Activated T-helper 1 cell treated with anti-CD3 and anti-CD28 coated beads, Interleukin-12 subunit alpha, Interleukin-12 subunit beta, Interleukin-2, Interleukin-4 antibody, amounts not matched to agents 30 ng/mL and 10 ng/mL and 1 ng/mL, durations not matched to agents 14 hours and 24 hours and 36 hours (primary cell): ENCODE measurements at regions of chr5 and their contacts with region 1.

Region 1: DNA sequence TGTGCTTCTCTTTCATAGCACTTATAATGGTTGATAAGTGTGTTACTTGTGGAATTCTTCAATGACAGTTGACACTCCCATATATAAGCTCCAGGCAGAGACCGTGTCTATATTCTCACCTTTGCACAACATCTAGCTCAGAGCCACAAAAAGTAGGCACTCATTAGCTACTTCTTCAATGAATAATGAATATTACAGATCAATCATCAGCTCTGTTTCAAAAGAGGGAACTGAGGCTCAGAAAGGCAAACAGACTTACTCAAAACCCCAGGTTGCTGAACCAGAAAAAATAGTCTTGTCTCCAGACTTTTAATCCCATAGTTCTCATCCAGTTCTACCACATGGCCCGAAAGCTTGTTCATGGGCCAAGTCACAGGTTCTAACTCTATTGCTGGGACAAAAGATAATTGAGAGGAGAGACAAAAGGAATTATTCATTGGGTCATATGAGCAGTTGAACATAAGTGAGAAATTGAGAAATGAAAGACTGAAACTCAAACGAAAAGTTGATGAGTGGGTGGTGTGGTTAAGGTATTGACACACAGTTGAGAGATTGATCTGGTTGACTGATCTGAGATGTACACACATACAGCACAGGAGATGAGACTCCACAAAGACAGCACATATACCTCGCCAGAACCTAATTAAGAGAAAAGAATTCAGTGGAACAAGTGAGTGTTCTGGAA is 381.6 kb downstream of the EFNA5 start:
- DNase-seq: no peak
- H3K4me3 Mint-ChIP-seq: no peak overlapping the region
- H3K27ac Mint-ChIP-seq: peak overlapping the region; percentile 26
- H3K4me1 Mint-ChIP-seq: peaks cover 15% of the 10 kb centered on the region
- H3K27me3 Mint-ChIP-seq: peaks cover 2% of the 10 kb centered on the region

Region 2: DNA sequence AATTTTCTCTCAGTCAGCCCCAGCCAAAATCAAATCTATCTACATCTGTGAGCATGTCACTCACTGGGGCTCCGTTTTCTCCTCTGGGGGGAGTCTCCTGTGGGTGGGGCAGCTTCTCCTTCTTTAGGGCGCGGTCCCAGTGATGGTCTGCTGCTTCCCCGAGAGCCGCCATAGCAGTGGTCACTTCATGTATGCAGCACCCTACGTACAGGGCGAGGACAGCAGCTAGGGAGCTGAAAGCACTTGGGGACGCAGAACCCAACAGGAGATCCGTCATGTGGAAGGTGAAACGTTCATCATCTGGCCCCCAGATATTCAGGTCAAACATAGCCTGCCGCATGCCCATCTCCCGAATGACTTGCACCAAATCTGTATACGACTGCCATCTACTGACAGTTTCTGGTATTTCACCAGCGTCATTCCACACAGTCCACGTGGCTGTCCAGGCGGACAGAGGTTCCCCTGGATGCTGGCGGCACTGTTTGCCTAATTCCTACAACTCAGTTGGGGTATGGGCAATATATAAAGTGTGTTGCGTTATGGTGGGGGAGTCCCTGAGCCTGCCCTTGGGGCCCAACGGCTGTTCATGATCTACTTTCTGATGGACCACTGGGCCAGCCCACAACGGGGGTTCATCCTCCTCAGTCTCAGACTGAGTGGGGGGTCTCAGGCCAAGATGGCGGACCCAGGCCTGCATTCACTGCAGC is 413.4 kb before region 1 on chr5:
- intact Hi-C with region 1: no loop called
- DNase-seq: no peak
- H3K4me3 Mint-ChIP-seq: no peak overlapping the region
- H3K27ac Mint-ChIP-seq: no peak overlapping the region
- H3K4me1 Mint-ChIP-seq: no peaks in the 10 kb centered on the region
- H3K27me3 Mint-ChIP-seq: no peaks in the 10 kb centered on the region

Region 3: GRCh38 chr5:107263387-107264018 is 25.7 kb before region 1 on chr5:
- intact Hi-C with region 1: loop called (anchors 1 kb)
- DNase-seq: no peak
- H3K4me3 Mint-ChIP-seq: no peak overlapping the region
- H3K27ac Mint-ChIP-seq: no peak overlapping the region
- H3K4me1 Mint-ChIP-seq: no peaks in the 10 kb centered on the region
- H3K27me3 Mint-ChIP-seq: no peaks in the 10 kb centered on the region

Region 4: DNA sequence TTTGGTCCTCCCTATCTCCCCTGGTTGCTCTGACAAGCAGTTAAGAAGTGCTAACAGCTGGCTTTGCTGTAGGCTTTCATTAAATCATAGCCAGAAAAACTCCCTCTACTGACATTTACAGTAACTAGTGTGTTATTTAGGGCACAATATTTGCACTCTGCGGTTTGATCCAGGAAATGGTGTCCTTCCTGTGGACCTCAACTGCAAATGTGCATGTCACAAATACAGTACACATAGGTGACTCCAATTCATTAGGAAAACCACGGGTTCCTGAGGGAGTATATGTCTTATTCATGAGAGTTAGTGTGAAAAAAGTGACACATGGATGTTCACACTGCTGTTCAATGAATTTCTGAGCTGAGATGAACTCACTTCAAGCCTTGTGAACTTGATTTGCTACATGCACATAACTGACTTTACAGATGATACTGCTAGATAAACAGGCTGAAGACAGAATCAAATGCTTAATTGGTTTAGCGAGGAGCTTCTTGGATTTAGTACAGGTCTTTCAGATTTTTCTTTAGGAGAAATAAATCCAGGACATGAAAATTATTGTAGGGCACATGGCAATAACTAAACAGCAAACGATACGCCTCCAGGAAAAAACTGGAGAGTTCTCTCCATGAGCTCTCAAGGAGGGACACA is 100.1 kb after region 1 on chr5:
- intact Hi-C with region 1: loop called (anchors 1 kb)
- DNase-seq: peak; percentile 13
- H3K4me3 Mint-ChIP-seq: peak overlapping the region; percentile 50
- H3K27ac Mint-ChIP-seq: peak overlapping the region; percentile 74
- H3K4me1 Mint-ChIP-seq: peaks cover 29% of the 10 kb centered on the region
- H3K27me3 Mint-ChIP-seq: no peaks in the 10 kb centered on the region

Region 5: GRCh38 chr5:107476783-107477182 is 187.6 kb after region 1 on chr5:
- intact Hi-C with region 1: loop called (anchors 2 kb)
- DNase-seq: peak; percentile 19
- H3K4me3 Mint-ChIP-seq: no peak overlapping the region
- H3K27ac Mint-ChIP-seq: peak overlapping the region; percentile 42
- H3K4me1 Mint-ChIP-seq: peaks cover 8% of the 10 kb centered on the region
- H3K27me3 Mint-ChIP-seq: peaks cover 5% of the 10 kb centered on the region

Region 6: DNA sequence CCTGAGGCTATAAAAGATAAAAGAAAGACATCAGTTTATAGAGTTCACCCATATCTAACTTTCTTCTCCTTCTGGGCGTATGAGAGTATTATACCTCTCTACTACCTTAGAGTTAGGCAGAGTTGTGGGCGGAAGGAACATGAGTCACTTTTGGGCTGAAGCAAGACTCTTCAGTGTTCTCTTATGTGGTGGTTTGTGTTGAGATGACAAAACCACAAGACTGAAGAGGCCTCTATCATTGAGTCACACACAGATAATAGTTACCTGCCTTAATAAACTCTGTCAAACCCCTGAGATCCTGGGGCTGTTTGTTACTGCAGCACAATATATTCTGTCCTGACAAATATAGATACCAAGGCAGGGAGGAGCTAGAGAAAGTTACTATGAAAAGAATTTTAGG is 197.3 kb after region 1 on chr5:
- intact Hi-C with region 1: loop called (anchors 1 kb)
- DNase-seq: peak; percentile 29
- H3K4me3 Mint-ChIP-seq: no peak overlapping the region
- H3K27ac Mint-ChIP-seq: no peak overlapping the region
- H3K4me1 Mint-ChIP-seq: peaks cover 21% of the 10 kb centered on the region
- H3K27me3 Mint-ChIP-seq: peaks cover 11% of the 10 kb centered on the region

Region 7: GRCh38 chr5:107571621-107572536 is 282.7 kb after region 1 on chr5:
- intact Hi-C with region 1: loop called (anchors 5 kb)
- DNase-seq: peak; percentile 73
- H3K4me3 Mint-ChIP-seq: peak overlapping the region; percentile 73
- H3K27ac Mint-ChIP-seq: no peak overlapping the region
- H3K4me1 Mint-ChIP-seq: peaks cover 21% of the 10 kb centered on the region
- H3K27me3 Mint-ChIP-seq: peaks cover 23% of the 10 kb centered on the region

Region 8: GRCh38 chr5:107919969-107920368 is 630.8 kb after region 1 on chr5:
- intact Hi-C with region 1: loop called (anchors 5 kb)
- DNase-seq: no peak
- H3K4me3 Mint-ChIP-seq: no peak overlapping the region
- H3K27ac Mint-ChIP-seq: peak overlapping the region; percentile 25
- H3K4me1 Mint-ChIP-seq: peaks cover 48% of the 10 kb centered on the region
- H3K27me3 Mint-ChIP-seq: no peaks in the 10 kb centered on the region